ENCODE measurements at regions of chr7 and their contacts with region 1.

Region 1: DNA sequence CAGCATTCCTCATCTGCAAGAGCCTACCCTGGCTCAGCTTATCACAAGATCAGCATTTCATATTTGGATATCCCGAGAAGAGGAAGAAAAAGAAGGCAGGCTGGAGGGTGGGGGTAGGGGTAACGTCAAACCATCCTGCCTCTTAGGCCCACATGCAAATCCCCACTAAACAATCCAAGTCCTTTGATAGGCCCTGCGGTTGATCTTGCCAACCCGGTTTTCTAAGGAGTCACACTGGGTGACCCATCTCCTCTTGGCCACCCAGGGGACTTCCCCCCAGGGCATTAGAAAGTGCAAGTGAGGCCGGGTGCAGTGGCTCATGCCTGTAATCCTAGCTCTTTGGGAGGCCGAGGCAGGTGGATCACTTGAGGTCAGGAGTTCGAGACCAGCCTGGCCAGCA is 128.0 kb upstream of the CALN1 start:
- DNase-seq: no peak
- ATAC-seq: no peak
- H3K4me3 Mint-ChIP-seq: no peak overlapping the region
- H3K27ac Mint-ChIP-seq: no peak overlapping the region
- H3K4me1 Mint-ChIP-seq: no peaks in the 10 kb centered on the region
- H3K27me3 Mint-ChIP-seq: no peaks in the 10 kb centered on the region

Region 2: DNA sequence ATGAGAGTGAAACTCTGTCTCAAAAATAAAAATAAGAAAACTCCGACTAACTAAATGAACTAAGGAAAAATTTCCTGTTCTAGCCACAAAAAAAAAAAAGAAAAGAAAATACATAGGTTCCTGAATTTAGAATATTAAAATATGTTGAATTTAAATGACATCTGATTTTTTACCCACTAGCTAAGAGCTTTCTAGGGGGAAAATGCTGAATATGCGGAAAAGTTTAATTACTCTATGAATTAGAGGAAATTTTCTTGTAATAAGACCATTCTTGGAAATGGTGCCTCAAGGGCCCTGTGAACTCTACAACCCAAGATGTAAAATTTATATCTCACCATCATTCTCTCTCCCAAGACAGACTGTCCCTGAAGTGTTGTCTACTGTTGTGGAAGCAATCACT is 36.9 kb after region 1 on chr7:
- CTCF ChIA-PET with region 1: no interaction called
- POLR2A ChIA-PET with region 1: no interaction called
- intact Hi-C with region 1: no loop called
- DNase-seq: no peak
- ATAC-seq: no peak
- H3K4me3 Mint-ChIP-seq: no peak overlapping the region
- H3K27ac Mint-ChIP-seq: no peak overlapping the region
- H3K4me1 Mint-ChIP-seq: no peaks in the 10 kb centered on the region
- H3K27me3 Mint-ChIP-seq: no peaks in the 10 kb centered on the region

Region 3: GRCh38 chr7:72603073-72603472 is 62.9 kb after region 1 on chr7:
- CTCF ChIA-PET with region 1: no interaction called
- POLR2A ChIA-PET with region 1: no interaction called
- intact Hi-C with region 1: loop called in 1 of 2 experiments (anchors 10 kb)
- DNase-seq: no peak
- ATAC-seq: no peak
- H3K4me3 Mint-ChIP-seq: no peak overlapping the region
- H3K27ac Mint-ChIP-seq: no peak overlapping the region
- H3K4me1 Mint-ChIP-seq: no peaks in the 10 kb centered on the region
- H3K27me3 Mint-ChIP-seq: no peaks in the 10 kb centered on the region